ENCODE measurements at regions of chr14 and their contacts with region 1.

Region 1: DNA sequence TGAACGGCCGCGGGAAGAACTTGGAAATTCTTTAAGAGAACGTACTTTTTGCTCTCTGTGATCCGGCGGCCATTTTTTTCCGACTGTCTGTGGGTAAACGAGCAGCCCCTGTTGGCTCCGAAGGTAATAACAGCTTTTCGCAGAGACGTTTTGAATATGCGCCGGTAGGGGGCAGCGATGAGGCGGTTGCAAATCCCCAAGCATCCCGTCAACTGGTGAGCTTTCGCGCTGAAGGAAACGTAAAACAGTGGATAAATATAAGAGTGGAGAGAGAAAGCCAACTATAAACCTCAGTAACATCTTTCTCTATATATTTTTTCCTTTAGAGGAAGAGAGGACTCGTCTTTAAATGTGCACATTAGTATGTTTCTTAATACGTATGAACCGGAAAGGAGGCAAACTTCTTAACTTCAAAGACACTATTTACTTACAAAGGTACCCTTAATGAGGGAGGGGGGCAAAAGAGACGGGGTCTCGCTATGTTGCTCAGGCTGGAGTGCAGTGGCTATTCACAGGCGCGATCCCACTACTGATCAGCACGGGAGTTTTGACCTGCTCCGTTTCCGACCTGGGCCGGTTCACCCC is 9.6 kb upstream of the NEMF start:
- DNase-seq: peak; percentile 71 to 97 (median 86)
- ATAC-seq: peak; percentile 24 to 31
- H3K4me3 Mint-ChIP-seq: no peak overlapping the region
- H3K27ac Mint-ChIP-seq: no peak overlapping the region
- H3K4me1 Mint-ChIP-seq: peaks cover 0 to 28% (median 15%) of the 10 kb centered on the region in 4 donors
- H3K27me3 Mint-ChIP-seq: peaks cover 0 to 8% (median 0%) of the 10 kb centered on the region in 5 donors

Region 2: GRCh38 chr14:49767562-49768300 is 94.5 kb before region 1 on chr14 and contains the start of gene KLHDC2:
- POLR2A ChIA-PET with region 1: interaction called, 35 read pairs
- DNase-seq: peak; percentile 81 to 92 (median 88)
- ATAC-seq: peak; percentile 79 to 82
- H3K4me3 Mint-ChIP-seq: peak within 1 kb of the TSS; percentile 91 to 98 (median 96)
- H3K27ac Mint-ChIP-seq: peak within 1 kb of the TSS; percentile 96 to 100 (median 99)
- H3K4me1 Mint-ChIP-seq: peaks cover 10 to 41% (median 39%) of the 10 kb centered on the region in 4 donors
- H3K27me3 Mint-ChIP-seq: no peaks in the 10 kb centered on the region
- polyA plus RNA-seq, gene KLHDC2: 72.5 to 77.4 (median 75.5) TPM

Region 3: DNA sequence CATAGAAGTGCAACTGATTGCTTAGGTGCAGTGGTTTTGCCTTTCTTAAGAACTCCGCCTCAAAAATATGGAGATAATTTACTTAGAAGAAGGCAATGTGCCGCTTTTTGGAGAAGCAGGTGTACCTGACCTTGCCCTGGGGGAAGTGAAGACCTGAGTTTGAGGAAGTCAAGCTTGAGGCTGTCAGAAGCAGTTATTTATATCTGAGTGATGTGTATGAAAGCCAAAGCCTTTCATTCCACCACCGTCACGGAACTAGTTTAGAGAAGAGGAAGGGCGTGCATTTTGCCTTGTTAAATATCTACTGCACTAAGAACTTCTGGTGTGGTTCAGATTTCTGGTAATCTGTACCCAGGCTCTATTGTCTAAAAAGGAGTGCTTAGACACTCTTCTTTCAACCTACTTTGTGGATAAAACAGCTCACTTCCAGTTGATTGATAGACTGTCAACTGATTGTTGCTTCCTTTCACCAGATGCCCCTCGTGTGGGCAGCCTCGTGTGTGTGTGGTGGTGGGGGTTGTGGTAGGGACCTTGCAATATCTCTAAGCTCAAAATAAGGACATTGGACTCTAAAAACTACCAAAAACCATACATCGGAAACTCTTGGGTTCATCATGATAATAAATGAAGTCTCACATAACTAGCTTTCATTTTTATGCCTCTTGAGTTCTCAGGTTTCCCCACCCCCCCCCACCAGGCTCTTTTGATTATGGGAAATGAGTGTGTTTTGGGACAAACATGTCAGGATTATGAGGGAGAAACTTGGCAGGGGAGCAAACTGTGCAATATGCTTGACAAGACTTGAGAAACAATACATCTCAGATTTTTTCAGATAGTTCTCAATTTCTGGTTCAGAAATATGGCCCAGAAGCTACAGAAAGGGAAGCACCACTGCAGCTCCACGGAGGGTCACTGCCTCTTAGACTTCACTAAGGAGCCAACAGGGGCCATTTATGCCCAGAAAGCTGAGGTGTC is 109.3 kb after region 1 on chr14:
- POLR2A ChIA-PET with region 1: interaction called, 68 read pairs
- DNase-seq: peak; percentile 19 to 91 (median 68)
- ATAC-seq: peak; percentile 86 to 91
- H3K4me3 Mint-ChIP-seq: peak overlapping the region; percentile 68 to 90 (median 83)
- H3K27ac Mint-ChIP-seq: peak overlapping the region; percentile 93 to 98 (median 96)
- H3K4me1 Mint-ChIP-seq: peaks cover 37 to 74% (median 62%) of the 10 kb centered on the region in 4 donors
- H3K27me3 Mint-ChIP-seq: no peaks in the 10 kb centered on the region

Region 4: DNA sequence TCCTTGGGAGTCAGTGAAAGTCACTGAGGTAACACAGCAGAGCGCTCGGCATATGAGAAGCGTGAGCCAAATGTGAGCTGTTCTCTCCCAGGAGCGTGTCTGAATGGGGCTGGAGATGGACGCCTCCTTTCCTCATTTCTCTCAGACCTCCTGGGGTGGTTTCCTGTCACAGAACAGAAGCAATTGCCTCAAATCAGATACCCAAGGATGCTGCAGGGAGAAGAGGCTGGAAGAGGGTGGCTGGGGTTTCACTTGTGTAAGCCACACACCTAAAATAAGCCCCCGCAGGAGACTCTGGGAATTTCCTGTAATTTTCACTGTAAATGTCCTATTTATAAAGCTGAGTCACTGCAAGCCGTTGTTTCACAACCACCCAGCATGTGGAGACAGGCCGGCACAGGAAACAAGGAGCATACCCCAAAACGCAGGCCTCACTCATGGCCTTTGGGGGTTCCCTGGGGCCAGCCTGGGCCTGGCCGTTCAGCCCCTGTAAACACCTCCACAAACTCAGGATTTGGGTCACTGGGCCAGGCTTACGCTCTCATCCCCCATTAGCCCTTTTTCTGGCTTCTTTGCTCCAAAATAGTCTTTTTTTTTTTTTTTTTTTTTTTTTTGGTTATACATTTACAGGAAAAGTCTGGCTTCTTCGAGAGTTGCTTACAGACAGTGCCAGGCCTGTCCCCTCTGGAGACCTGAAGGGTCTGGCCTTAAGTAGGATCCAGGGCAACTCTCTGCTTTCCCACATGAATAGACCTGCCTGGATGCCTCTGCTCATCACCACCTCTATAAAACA is 198.9 kb after region 1 on chr14:
- POLR2A ChIA-PET with region 1: interaction called, 119 read pairs
- DNase-seq: peak in 2 of 10 donors; percentile 17 to 21
- ATAC-seq: no peak
- H3K4me3 Mint-ChIP-seq: peak overlapping the region; percentile 74 to 95 (median 90)
- H3K27ac Mint-ChIP-seq: peak overlapping the region; percentile 97 to 100 (median 98)
- H3K4me1 Mint-ChIP-seq: peaks cover 43 to 91% (median 83%) of the 10 kb centered on the region in 4 donors
- H3K27me3 Mint-ChIP-seq: no peaks in the 10 kb centered on the region

Region 5: DNA sequence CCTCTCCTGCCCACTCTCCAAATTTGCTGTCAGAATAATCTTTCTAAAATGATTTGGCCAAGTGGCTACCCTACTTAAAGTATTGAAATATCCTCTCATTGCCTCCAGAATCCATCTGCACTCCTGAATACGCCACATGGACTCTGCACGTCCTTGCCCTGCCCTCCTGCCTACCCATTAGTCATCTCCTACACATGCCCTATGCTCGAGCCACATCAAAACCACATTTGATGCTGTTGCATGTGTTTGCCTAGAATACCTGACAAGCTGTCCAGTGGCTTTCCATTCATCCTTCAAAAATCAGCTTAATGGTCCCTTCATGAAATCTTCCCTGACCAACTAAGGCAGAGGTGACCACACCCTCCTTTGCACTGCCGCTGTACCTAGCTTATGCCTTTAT is 237.2 kb after region 1 on chr14:
- POLR2A ChIA-PET with region 1: interaction called, 71 read pairs
- DNase-seq: no peak
- ATAC-seq: peak in 1 of 2 donors; percentile 48
- H3K4me3 Mint-ChIP-seq: peak overlapping the region in 9 of 10 donors; percentile 17 to 79 (median 52)
- H3K27ac Mint-ChIP-seq: peak overlapping the region; percentile 36 to 95 (median 82)
- H3K4me1 Mint-ChIP-seq: peaks cover 35 to 82% (median 71%) of the 10 kb centered on the region in 4 donors
- H3K27me3 Mint-ChIP-seq: no peaks in the 10 kb centered on the region

Measured in naive thymus-derived CD8-positive, alpha-beta T cell (primary cell).